HEK293 (cell line): ENCODE measurements at regions of chr5 and their contacts with region 1.

Region 1: DNA sequence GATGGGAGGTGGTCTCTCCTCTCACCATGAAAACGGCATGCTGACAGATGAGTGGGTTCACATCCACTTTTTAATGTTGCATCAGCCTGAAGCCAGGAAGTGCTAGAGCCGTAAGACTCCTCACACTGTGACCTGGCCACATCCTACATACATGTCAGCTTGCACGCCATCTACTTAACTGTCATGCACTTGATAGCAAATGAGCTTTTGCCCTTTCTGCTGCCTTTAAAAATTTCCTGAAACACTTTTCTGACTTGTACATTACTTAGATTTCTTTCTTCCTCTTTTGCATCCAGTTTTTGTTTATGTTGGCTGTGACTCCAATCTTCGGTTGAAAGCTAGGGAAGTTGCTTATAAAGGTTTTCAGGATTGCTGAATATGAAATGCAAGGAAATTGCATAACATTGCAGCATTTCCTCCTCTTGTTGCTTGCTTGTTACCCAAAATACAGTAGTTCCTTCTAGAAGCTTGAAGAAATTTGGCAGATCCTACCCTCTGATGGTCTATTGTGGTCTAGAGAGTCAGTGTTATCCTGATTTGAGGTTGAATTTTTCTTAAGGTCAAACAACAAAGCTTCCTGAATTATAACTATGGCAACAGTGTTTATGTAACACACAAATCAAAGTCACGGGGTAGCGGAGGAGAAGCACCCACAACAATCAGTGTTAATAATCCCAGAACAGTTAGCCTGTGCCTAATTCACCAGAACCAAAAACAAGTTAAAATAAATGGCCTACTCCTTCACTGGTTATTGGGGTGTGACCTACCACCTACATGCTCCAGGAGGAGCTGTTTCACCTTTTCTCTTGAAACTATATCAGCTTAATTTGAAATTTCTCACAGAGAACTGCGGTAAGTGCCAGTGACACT is 232.5 kb downstream of the ARHGAP26 start:
- H3K4me3 ChIP-seq: no peak overlapping the region
- H3K27ac ChIP-seq: 0 out of 2 replicates have a peak overlapping the region, but pooled peaks have one; percentile 16
- H3K4me1 ChIP-seq: no peaks in the 10 kb centered on the region
- CTCF ChIP-seq: peak; percentile 33; the same call in 1 of the 2 replicates

Region 2: DNA sequence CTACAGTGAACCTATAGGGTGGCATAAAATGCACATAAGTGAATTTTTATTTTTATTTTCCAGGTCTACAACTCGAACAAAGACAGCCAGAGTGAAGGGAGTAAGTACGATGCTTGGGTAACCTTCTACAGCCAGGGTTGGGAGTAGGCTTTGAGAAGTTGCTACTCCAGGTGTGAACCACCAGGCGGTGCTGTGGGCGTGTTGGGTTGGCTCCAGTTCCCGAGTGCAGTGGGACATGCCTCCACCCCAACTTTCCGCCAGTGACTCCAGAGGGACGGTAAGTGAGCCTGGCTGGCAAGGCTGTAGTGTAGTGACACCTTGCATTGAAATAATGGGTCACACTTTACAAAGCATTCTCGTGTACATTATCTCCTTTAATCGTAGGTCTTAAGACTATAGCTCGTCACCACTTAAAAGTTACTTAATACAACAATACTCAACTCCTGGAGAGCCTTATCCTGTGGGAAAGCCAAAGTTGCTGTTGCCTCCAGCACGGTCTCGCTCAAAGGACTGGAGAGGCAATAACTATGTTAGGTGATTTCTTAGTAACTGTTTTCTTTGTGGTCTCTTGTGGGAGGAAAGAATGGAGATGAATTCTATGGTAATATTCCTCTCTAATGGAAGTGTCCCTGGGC is 11.4 kb after region 1 on chr5:
- CTCF ChIA-PET with region 1: interaction called, 14 read pairs
- POLR2A ChIA-PET with region 1: no interaction called
- H3K4me3 ChIP-seq: no peak overlapping the region
- H3K27ac ChIP-seq: no peak overlapping the region
- H3K4me1 ChIP-seq: peaks cover 11% of the 10 kb centered on the region
- CTCF ChIP-seq: peak; percentile 42

Region 3: DNA sequence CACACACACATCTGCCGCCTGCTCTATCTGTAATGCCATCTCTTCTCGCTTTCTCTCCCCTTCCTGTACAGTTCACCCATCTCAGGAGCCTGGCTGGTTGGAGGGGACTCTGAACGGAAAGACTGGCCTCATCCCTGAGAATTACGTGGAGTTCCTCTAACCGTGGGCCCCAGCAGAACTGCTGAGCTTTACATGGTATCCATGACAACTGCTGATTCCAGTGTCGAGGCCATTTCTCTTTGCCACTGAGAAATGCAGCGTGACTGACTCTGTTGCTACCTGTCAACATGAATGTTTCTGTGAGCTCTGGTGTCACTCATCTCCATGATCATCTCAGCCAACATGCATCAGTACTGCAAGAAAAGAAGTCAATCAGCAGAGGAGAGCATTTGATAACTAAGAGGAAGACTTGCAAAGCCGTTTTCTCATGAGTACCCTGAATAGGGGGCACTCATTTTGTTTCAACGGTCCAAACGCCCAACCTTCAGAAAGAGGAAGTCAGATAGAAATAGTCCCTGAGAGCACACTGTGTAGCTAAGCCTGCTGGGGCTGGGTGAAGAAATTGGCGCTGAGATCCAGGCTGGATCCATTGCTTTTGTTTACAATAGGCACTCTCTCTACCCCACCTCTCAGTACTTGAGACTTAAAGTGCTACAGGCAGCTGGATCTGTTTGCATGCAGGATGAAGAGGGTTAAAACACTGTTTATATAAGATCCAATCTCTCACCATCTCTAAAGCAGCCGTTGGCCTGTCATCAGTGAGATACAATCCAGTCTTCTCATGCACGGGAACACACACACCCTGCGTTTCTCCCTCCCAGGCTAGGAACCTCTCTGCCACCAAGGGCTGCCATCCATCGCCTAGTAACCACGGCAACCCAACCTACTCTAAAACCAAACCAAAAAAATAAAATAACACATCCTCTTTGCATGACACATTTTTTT is 219.9 kb after region 1 on chr5:
- CTCF ChIA-PET with region 1: no interaction called
- POLR2A ChIA-PET with region 1: no interaction called
- H3K4me3 ChIP-seq: no peak overlapping the region
- H3K27ac ChIP-seq: no peak overlapping the region
- H3K4me1 ChIP-seq: peaks cover 5% of the 10 kb centered on the region
- CTCF ChIP-seq: no peak